Activated CD4-positive, alpha-beta T cell treated with anti-CD3 and anti-CD28 coated beads for 36 hours (primary cell): ENCODE measurements at regions of chr19 and their contacts with region 1.

Region 1: GRCh38 chr19:40570313-40571004 is 6.2 kb upstream of the SHKBP1 start:
- DNase-seq: peak; percentile 97
- ATAC-seq: peak; percentile 94
- H3K4me3 Mint-ChIP-seq: peak overlapping the region; percentile 50
- H3K27ac Mint-ChIP-seq: peak overlapping the region; percentile 7
- H3K4me1 Mint-ChIP-seq: peaks cover 12% of the 10 kb centered on the region
- H3K27me3 Mint-ChIP-seq: peaks cover 19% of the 10 kb centered on the region

Region 2: DNA sequence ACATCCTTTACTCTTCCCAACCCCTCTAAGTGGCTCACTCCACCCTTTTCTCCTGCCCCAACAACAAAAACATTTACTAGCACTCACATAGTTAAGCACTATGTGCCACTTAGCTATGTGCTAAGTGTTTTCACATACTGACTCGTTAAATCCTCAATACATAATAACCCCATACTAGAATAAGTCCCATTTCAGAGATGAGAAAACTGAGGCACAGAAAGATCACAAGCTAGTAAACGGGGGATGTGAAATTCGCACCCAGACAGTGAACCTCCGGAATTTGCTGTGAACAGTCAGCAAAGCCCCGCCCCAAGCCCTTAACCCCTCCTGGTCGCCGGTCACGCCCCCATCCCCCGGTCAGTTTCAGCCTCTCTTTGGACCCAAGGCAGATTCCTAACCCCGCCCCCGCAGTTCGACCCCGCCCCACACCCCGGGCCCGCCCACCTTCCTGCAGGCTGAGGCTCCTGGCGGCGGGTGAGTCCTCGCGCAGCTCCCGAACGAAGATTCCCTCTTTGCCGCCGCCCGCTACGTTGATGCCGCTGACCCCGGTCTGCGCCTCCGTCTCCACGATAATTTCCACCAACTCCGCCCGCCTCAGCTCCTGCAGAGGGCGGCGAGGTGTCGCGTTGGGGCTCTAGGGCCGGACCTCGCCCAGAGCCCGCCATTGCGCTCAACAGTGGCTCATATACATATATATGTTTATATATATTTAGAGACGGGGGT is 167.0 kb before region 1 on chr19:
- CTCF ChIA-PET with region 1: no interaction called
- POLR2A ChIA-PET with region 1: no interaction called
- intact Hi-C with region 1: loop called in 1 of 2 experiments (anchors 1 kb)
- DNase-seq: peak; percentile 94
- ATAC-seq: peak; percentile 67
- H3K4me3 Mint-ChIP-seq: peak overlapping the region; percentile 77
- H3K27ac Mint-ChIP-seq: peak overlapping the region; percentile 0
- H3K4me1 Mint-ChIP-seq: peaks cover 19% of the 10 kb centered on the region
- H3K27me3 Mint-ChIP-seq: no peaks in the 10 kb centered on the region

Region 3: GRCh38 chr19:40465557-40466150 is 104.8 kb before region 1 on chr19 and contains the start of gene BLVRB:
- CTCF ChIA-PET with region 1: interaction called, 5 read pairs
- POLR2A ChIA-PET with region 1: no interaction called
- intact Hi-C with region 1: loop called in 1 of 2 experiments (anchors 1 kb)
- DNase-seq: peak; percentile 100
- ATAC-seq: peak; percentile 84
- H3K4me3 Mint-ChIP-seq: peak within 1 kb of the TSS; percentile 77
- H3K27ac Mint-ChIP-seq: peak within 1 kb of the TSS; percentile 87
- H3K4me1 Mint-ChIP-seq: peaks cover 30% of the 10 kb centered on the region
- H3K27me3 Mint-ChIP-seq: peaks cover 11% of the 10 kb centered on the region
- total RNA-seq, gene BLVRB: 34.1 to 35.6 TPM

Region 4: GRCh38 chr19:40529093-40529954 is 41.1 kb before region 1 on chr19:
- CTCF ChIA-PET with region 1: no interaction called
- POLR2A ChIA-PET with region 1: no interaction called
- intact Hi-C with region 1: loop called in 1 of 2 experiments (anchors 1 kb)
- DNase-seq: peak; percentile 95
- ATAC-seq: peak; percentile 75
- H3K4me3 Mint-ChIP-seq: peak overlapping the region; percentile 47
- H3K27ac Mint-ChIP-seq: no peak overlapping the region
- H3K4me1 Mint-ChIP-seq: peaks cover 11% of the 10 kb centered on the region
- H3K27me3 Mint-ChIP-seq: peaks cover 19% of the 10 kb centered on the region

Region 5: DNA sequence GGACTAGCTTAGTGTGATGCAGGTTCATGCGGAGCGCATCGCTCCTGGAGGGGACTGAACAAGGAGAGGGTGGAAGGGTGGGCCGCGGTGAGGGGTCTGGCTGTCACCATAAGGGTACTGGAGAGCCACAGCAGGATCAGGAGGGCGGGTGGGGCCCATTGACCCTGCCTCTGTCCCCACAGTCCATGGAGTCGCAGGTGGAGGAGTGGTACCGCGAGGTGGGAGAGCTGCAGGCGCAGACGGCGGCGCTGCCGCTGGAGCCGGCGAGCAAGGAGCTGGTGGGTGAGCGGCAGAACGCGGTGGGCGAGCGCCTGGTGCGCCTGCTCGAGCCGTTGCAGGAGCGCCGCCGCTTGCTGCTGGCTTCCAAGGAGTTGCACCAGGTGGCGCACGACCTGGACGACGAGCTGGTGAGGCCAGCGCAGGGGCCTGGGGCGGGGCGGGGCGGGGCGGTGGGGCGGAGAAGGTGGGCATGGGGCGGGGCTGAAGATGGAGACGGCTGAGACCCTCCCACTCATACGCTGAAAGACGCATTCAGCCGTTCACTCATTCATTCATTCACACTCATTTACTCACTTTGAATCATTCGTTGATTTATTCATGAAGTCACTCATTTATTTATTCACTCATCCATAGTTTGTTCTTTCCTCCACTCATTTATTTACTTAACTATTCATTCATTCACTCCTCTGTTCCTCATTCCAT is 21.3 kb before region 1 on chr19:
- CTCF ChIA-PET with region 1: interaction called, 4 read pairs
- POLR2A ChIA-PET with region 1: interaction called, 4 read pairs
- intact Hi-C with region 1: loop called in 1 of 2 experiments (anchors 1 kb)
- DNase-seq: peak; percentile 90
- ATAC-seq: peak; percentile 95
- H3K4me3 Mint-ChIP-seq: no peak overlapping the region
- H3K27ac Mint-ChIP-seq: no peak overlapping the region
- H3K4me1 Mint-ChIP-seq: peaks cover 10% of the 10 kb centered on the region
- H3K27me3 Mint-ChIP-seq: peaks cover 37% of the 10 kb centered on the region

Region 6: DNA sequence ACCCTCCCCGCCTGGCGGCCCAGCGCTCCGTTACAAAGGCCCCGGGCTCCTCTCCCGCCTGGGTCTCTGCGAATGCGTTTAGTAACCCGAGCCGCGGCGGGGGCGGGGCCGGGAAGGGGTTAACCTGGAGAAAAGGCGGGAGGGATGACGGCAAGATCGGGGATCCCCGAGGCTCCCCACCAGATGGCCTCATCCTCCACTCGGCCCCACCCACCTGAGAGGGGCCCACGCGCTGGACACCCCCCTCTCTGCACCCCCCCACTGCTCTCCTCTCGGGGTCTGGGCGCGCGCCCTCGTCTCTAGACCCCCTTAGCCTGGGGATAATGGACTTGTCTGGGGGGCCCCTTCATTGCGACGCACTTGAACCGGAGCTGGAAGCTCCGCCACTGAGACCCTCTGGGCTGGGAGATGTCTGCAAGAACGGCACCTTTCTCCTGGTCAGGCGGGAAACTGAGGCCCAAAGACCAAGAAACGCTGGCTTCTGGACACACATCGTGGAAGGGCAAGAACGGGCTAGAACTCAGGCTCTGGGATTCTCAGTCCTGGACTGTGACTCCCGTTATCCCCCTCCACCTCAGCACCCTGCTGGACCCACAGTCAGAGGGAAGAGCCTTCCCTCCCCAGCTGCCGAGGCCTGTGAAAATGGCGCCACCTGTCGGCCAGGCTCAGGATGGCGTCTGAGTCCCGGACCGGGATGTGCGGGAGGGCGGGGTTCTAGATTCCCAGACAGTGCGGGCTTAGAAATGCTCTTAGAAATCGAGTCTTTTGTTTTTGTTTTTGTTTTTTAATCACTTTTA is 27.9 kb after region 1 on chr19:
- CTCF ChIA-PET with region 1: interaction called, 3 read pairs
- POLR2A ChIA-PET with region 1: interaction called, 3 read pairs
- intact Hi-C with region 1: loop called in 1 of 2 experiments (anchors 1 kb)
- DNase-seq: peak; percentile 92
- ATAC-seq: peak; percentile 71
- H3K4me3 Mint-ChIP-seq: peak overlapping the region; percentile 23
- H3K27ac Mint-ChIP-seq: no peak overlapping the region
- H3K4me1 Mint-ChIP-seq: peaks cover 50% of the 10 kb centered on the region
- H3K27me3 Mint-ChIP-seq: peaks cover 34% of the 10 kb centered on the region

Region 7: GRCh38 chr19:40614622-40615411 is 44.4 kb after region 1 on chr19:
- CTCF ChIA-PET with region 1: no interaction called
- POLR2A ChIA-PET with region 1: no interaction called
- intact Hi-C with region 1: loop called in 1 of 2 experiments (anchors 1 kb)
- DNase-seq: peak; percentile 98
- ATAC-seq: peak; percentile 55
- H3K4me3 Mint-ChIP-seq: peak overlapping the region; percentile 99
- H3K27ac Mint-ChIP-seq: peak overlapping the region; percentile 100
- H3K4me1 Mint-ChIP-seq: peaks cover 58% of the 10 kb centered on the region
- H3K27me3 Mint-ChIP-seq: no peaks in the 10 kb centered on the region

Region 8: DNA sequence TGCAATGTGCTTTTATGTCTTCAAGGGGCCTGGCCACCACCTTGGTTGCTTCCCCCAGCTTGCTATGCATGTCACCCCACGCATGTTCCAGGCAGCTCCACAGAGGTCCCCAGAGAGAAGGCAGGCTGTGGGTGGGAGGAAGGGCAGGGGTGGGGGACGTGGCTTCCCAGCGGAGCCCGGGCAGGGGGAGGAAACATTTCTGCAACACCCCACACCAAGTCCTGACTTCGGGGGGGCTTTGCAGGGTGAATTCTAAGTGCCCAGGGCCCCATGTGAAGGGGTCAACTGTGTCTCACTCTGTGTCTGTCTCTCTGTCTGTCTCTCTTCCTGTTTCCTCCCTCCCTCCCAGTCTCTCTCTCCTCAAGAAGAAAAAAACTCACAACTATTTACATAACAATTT is 70.3 kb after region 1 on chr19:
- CTCF ChIA-PET with region 1: no interaction called
- POLR2A ChIA-PET with region 1: no interaction called
- intact Hi-C with region 1: no loop called
- DNase-seq: no peak
- ATAC-seq: no peak
- H3K4me3 Mint-ChIP-seq: no peak overlapping the region
- H3K27ac Mint-ChIP-seq: no peak overlapping the region
- H3K4me1 Mint-ChIP-seq: peaks cover 5% of the 10 kb centered on the region
- H3K27me3 Mint-ChIP-seq: peaks cover 1% of the 10 kb centered on the region